CD4-positive, alpha-beta memory T cell (primary cell): ENCODE measurements at regions of chr16 and their contacts with region 1.

Region 1: GRCh38 chr16:15822957-15823356 is 33.9 kb downstream of the MYH11 start:
- DNase-seq: no peak
- H3K4me3 ChIP-seq: no peak overlapping the region
- H3K4me3 Mint-ChIP-seq: peak overlapping the region in 1 of 8 donors; percentile 12
- H3K27ac ChIP-seq: no peak overlapping the region
- H3K27ac Mint-ChIP-seq: no peak overlapping the region
- H3K4me1 ChIP-seq: no peaks in the 10 kb centered on the region
- H3K4me1 Mint-ChIP-seq: no peaks in the 10 kb centered on the region
- H3K27me3 ChIP-seq: no peaks in the 10 kb centered on the region
- H3K27me3 Mint-ChIP-seq: peaks cover 2 to 3% of the 10 kb centered on the region in 2 donors

Region 2: GRCh38 chr16:15427648-15428239 is 395.2 kb before region 1 on chr16:
- CTCF ChIA-PET with region 1: interaction called, 3 read pairs
- POLR2A ChIA-PET with region 1: no interaction called
- intact Hi-C with region 1: loop called (anchors 1 kb)
- DNase-seq: peak; percentile 27 to 53 (median 40)
- H3K4me3 ChIP-seq: no peak overlapping the region
- H3K4me3 Mint-ChIP-seq: no peak overlapping the region
- H3K27ac ChIP-seq: no peak overlapping the region
- H3K27ac Mint-ChIP-seq: peak overlapping the region in 1 of 7 donors; percentile 56
- H3K4me1 ChIP-seq: no peaks in the 10 kb centered on the region
- H3K4me1 Mint-ChIP-seq: peaks cover 0 to 3% (median under 1%) of the 10 kb centered on the region in 4 donors
- H3K27me3 ChIP-seq: no peaks in the 10 kb centered on the region
- H3K27me3 Mint-ChIP-seq: peaks cover 6 to 7% of the 10 kb centered on the region in 2 donors

Region 3: GRCh38 chr16:15811481-15812400 is 11.2 kb before region 1 on chr16:
- CTCF ChIA-PET with region 1: interaction called, 24 read pairs
- POLR2A ChIA-PET with region 1: no interaction called
- intact Hi-C with region 1: no loop called
- DNase-seq: no peak
- H3K4me3 ChIP-seq: no peak overlapping the region
- H3K4me3 Mint-ChIP-seq: no peak overlapping the region
- H3K27ac ChIP-seq: no peak overlapping the region
- H3K27ac Mint-ChIP-seq: no peak overlapping the region
- H3K4me1 ChIP-seq: no peaks in the 10 kb centered on the region
- H3K4me1 Mint-ChIP-seq: no peaks in the 10 kb centered on the region
- H3K27me3 ChIP-seq: no peaks in the 10 kb centered on the region
- H3K27me3 Mint-ChIP-seq: peaks cover 13 to 15% of the 10 kb centered on the region in 2 donors